Caco-2 (cell line): ENCODE measurements at regions of chr3 and their contacts with region 1.

Region 1: DNA sequence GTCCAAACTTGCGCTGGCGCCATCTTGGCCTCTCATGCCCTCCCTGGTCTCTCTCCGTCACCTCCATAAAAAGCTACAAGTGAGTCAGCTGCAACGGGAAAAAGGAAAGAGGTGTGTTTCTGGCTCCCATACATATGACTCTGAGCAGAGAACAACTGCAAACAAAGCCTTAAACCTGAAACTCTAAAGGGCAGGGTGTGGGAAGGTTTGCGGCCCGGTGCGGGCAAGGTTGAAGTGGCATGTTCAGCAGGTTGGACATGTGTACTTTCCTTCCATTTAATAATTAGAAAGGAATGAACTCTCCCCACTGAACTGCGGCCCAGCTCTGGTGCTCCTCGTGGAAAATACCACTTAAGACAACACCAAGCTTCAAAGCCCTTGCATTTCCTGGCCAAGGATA is 59.0 kb upstream of the PPARG start:
- DNase-seq: no peak
- H3K4me3 ChIP-seq: no peak overlapping the region
- H3K4me3 Mint-ChIP-seq: no peak overlapping the region
- H3K27ac Mint-ChIP-seq: no peak overlapping the region
- H3K4me1 ChIP-seq: peaks cover 41% of the 10 kb centered on the region
- H3K4me1 Mint-ChIP-seq: peaks cover 36% of the 10 kb centered on the region
- H3K27me3 ChIP-seq: no peaks in the 10 kb centered on the region
- H3K27me3 Mint-ChIP-seq: no peaks in the 10 kb centered on the region
- CTCF ChIP-seq: no peak

Region 2: GRCh38 chr3:12165909-12166308 is 64.0 kb before region 1 on chr3:
- CTCF ChIA-PET with region 1: no interaction called
- POLR2A ChIA-PET with region 1: no interaction called
- intact Hi-C with region 1: no loop called
- DNase-seq: peak in 1 of 2 experiments; percentile 46
- H3K4me3 ChIP-seq: no peak overlapping the region
- H3K4me3 Mint-ChIP-seq: no peak overlapping the region
- H3K27ac Mint-ChIP-seq: no peak overlapping the region
- H3K4me1 ChIP-seq: peaks cover 15% of the 10 kb centered on the region
- H3K4me1 Mint-ChIP-seq: no peaks in the 10 kb centered on the region
- H3K27me3 ChIP-seq: no peaks in the 10 kb centered on the region
- H3K27me3 Mint-ChIP-seq: no peaks in the 10 kb centered on the region
- CTCF ChIP-seq: peak in 1 of 2 experiments; percentile 38

Region 3: DNA sequence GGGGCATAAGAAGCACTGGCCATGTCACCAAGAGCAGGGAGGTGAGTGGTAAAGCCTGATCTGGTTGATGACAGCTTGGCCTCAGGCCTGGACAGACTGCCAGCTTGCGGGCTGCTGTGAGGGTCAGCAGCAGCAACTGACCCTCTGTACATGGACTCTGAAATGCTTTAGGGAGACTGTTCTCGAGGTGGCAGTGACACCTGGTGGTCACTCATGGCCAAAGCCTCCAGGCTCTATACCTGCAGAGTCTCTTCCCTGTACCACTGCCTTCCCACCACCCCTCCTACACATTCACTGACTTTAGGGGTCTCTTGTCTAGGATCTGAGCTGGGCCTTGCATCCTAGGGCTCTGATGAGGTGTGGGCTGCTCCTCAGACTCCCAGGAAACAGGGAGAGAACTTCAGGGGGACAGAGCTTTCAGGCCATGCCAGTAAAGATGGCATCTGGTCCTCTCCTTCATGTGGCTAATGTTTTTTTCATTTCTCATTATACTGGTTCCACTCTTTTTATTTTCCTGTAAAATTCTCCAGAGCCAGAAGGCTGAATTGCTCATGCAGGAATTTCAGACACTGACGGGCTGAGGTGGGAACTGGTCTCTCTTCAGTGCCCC is 54.0 kb before region 1 on chr3:
- CTCF ChIA-PET with region 1: no interaction called
- POLR2A ChIA-PET with region 1: no interaction called
- intact Hi-C with region 1: loop called (anchors 5 kb)
- DNase-seq: peak; percentile 56 to 69
- H3K4me3 ChIP-seq: no peak overlapping the region
- H3K4me3 Mint-ChIP-seq: no peak overlapping the region
- H3K27ac Mint-ChIP-seq: no peak overlapping the region
- H3K4me1 ChIP-seq: peaks cover 3% of the 10 kb centered on the region; the same call in 1 of the 2 replicates
- H3K4me1 Mint-ChIP-seq: no peaks in the 10 kb centered on the region
- H3K27me3 ChIP-seq: no peaks in the 10 kb centered on the region
- H3K27me3 Mint-ChIP-seq: no peaks in the 10 kb centered on the region
- CTCF ChIP-seq: peak; percentile 82 to 85

Region 4: DNA sequence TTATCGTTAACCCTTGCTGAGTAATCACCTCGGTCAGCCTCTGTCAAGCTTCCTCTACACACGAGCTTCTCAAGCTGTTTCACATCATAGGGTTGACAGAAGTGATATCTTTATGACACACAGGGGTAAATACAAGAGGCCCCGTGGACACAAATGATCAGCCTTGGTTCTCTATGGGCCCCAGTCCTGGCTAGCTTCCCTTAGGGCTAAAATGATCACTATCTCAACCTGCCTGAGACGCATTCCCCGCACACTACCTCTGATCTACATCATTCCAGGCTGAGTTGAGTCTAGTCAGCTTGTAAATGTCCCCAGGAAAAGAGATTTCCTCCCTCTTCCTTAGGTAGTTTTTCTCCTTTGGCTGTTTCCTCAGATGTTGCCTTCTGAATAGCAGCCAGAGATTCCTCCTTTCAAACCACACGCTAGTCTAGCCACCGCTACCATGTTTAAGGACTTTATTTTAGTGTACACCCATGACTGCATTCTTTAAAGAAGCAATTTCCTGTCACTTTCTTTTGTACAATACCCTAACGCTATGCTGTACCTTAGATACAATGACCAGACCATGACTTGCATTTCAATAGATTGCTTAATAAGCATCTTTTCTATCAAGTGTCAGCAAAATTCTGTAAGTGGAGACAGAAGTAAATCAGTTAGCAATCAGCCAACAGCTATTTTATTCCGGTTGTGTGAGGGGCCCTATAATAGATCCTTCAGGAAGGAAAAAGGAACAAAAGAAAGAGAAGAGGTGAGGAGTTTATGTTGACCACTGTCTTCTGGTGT is 23.8 kb after region 1 on chr3:
- CTCF ChIA-PET with region 1: no interaction called
- POLR2A ChIA-PET with region 1: no interaction called
- intact Hi-C with region 1: loop called (anchors 2 kb)
- DNase-seq: peak; percentile 66 to 80
- H3K4me3 ChIP-seq: no peak overlapping the region
- H3K4me3 Mint-ChIP-seq: peak overlapping the region; percentile 15
- H3K27ac Mint-ChIP-seq: peak overlapping the region; percentile 35
- H3K4me1 ChIP-seq: peaks cover 28% of the 10 kb centered on the region
- H3K4me1 Mint-ChIP-seq: peaks cover 37% of the 10 kb centered on the region
- H3K27me3 ChIP-seq: no peaks in the 10 kb centered on the region
- H3K27me3 Mint-ChIP-seq: no peaks in the 10 kb centered on the region
- CTCF ChIP-seq: no peak